Caco-2 (cell line): ENCODE measurements at regions of chr16 and their contacts with region 1.

Region 1: GRCh38 chr16:53054670-53055485 is at the start of gene CHD9:
- DNase-seq: peak; percentile 90 to 92
- H3K4me3 ChIP-seq: peak within 1 kb of the TSS; percentile 77
- H3K4me3 Mint-ChIP-seq: peak within 1 kb of the TSS; percentile 82
- H3K27ac Mint-ChIP-seq: peak within 1 kb of the TSS; percentile 77
- H3K4me1 ChIP-seq: peaks cover 11% of the 10 kb centered on the region; the same call in 1 of the 2 replicates
- H3K4me1 Mint-ChIP-seq: peaks cover 14% of the 10 kb centered on the region
- H3K27me3 ChIP-seq: no peaks in the 10 kb centered on the region
- H3K27me3 Mint-ChIP-seq: no peaks in the 10 kb centered on the region
- CTCF ChIP-seq: peak; percentile 98 to 99
- total RNA-seq, gene CHD9: 29.1 and 32.0 TPM in 2 replicates

Region 2: GRCh38 chr16:53130159-53131049 is 75.5 kb after region 1 on chr16:
- CTCF ChIA-PET with region 1: interaction called, 7 read pairs
- POLR2A ChIA-PET with region 1: interaction called, 8 read pairs
- intact Hi-C with region 1: loop called (anchors 1 kb)
- DNase-seq: peak; percentile 97 to 98
- H3K4me3 ChIP-seq: peak overlapping the region; percentile 98
- H3K4me3 Mint-ChIP-seq: peak overlapping the region; percentile 83
- H3K27ac Mint-ChIP-seq: peak overlapping the region; percentile 92
- H3K4me1 ChIP-seq: peaks cover 28% of the 10 kb centered on the region
- H3K4me1 Mint-ChIP-seq: peaks cover 26% of the 10 kb centered on the region
- H3K27me3 ChIP-seq: no peaks in the 10 kb centered on the region
- H3K27me3 Mint-ChIP-seq: no peaks in the 10 kb centered on the region
- CTCF ChIP-seq: peak; percentile 65 to 68

Region 3: GRCh38 chr16:53207810-53208752 is 153.2 kb after region 1 on chr16:
- CTCF ChIA-PET with region 1: interaction called, 21 read pairs
- POLR2A ChIA-PET with region 1: interaction called, 5 read pairs
- intact Hi-C with region 1: loop called (anchors 1 kb)
- DNase-seq: peak; percentile 76 to 77
- H3K4me3 ChIP-seq: peak overlapping the region; percentile 43
- H3K4me3 Mint-ChIP-seq: peak overlapping the region; percentile 93
- H3K27ac Mint-ChIP-seq: peak overlapping the region; percentile 97
- H3K4me1 ChIP-seq: no peaks in the 10 kb centered on the region; the same call in 1 of the 2 replicates
- H3K4me1 Mint-ChIP-seq: peaks cover 14% of the 10 kb centered on the region
- H3K27me3 ChIP-seq: no peaks in the 10 kb centered on the region
- H3K27me3 Mint-ChIP-seq: no peaks in the 10 kb centered on the region
- CTCF ChIP-seq: peak; percentile 71 to 77

Region 4: DNA sequence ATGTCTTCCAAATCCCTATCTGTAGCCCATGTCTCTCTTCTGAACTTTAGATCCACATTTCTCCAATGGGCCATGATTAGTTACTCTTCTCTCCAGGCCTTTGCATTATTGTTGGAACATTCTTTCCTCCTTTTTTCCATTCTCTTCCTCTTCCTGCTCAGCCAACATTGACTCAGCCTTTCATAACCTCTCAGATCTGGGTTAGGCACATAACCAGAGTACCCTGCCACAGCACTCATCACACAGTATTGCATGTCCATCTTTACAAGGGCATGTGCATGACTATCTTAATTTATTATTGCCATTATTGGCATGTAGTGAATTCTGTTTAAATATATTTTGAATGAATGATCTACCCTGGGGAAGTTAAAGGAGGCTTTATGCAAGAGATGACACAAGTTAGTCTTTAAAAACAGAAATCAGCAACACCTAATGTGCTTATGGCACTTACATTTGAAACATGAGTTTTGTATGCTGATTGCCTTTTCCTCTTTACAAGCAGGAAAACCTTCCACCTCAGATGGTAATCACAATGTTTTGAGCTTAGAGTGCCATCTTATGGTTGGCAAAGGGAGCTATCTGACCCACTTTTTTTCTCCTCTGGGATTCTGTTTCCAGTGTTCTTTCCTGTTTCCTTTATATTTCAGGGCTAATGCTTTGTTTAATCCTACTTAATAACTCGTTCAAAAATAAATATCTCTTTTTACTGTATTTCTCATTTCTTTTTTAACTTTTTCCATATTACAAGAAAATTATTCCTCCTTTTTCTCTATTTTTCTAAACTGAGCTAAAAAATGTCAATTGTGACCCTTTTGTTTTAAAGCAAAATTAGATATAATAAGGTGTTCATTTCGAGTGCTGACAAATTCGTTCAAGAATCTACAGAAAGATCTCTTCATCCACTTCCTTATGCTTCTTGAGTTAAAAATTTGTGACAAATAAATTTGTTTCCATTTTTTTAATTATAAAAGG is 228.4 kb after region 1 on chr16:
- CTCF ChIA-PET with region 1: interaction called, 15 read pairs
- POLR2A ChIA-PET with region 1: no interaction called
- intact Hi-C with region 1: loop called (anchors 1 kb)
- DNase-seq: peak in 1 of 2 experiments; percentile 53
- H3K4me3 ChIP-seq: no peak overlapping the region
- H3K4me3 Mint-ChIP-seq: no peak overlapping the region
- H3K27ac Mint-ChIP-seq: no peak overlapping the region
- H3K4me1 ChIP-seq: no peaks in the 10 kb centered on the region
- H3K4me1 Mint-ChIP-seq: no peaks in the 10 kb centered on the region
- H3K27me3 ChIP-seq: no peaks in the 10 kb centered on the region
- H3K27me3 Mint-ChIP-seq: no peaks in the 10 kb centered on the region
- CTCF ChIP-seq: peak; percentile 26 to 66